ENCODE measurements at regions of chr3 and their contacts with region 1.

Region 1: DNA sequence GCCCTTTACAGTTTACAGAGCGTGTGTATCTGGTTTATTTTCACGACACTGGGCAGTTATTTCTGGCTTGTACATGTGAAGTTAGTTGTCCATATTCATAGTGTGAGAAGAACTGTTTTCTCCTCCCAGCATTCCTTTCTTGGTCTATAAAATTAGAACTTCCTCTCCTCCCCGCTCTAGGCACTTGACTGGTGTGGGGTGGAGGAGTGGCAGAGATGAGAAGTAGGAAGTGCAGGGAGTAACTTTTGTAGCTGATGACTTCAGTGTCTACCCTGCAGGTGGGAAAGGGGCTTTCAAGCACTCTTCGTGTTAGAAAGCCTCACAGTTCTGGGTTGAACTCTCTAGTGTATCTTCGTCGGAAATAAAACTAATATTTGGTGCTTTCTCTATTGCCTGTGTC is 13.4 kb downstream of the APOD start:
- DNase-seq: no peak
- H3K4me3 ChIP-seq: no peak overlapping the region
- H3K27ac ChIP-seq: no peak overlapping the region
- H3K4me1 ChIP-seq: no peaks in the 10 kb centered on the region
- H3K27me3 ChIP-seq: no peaks in the 10 kb centered on the region
- CTCF ChIP-seq: no peak
- POLR2A ChIP-seq: no peak

Region 2: DNA sequence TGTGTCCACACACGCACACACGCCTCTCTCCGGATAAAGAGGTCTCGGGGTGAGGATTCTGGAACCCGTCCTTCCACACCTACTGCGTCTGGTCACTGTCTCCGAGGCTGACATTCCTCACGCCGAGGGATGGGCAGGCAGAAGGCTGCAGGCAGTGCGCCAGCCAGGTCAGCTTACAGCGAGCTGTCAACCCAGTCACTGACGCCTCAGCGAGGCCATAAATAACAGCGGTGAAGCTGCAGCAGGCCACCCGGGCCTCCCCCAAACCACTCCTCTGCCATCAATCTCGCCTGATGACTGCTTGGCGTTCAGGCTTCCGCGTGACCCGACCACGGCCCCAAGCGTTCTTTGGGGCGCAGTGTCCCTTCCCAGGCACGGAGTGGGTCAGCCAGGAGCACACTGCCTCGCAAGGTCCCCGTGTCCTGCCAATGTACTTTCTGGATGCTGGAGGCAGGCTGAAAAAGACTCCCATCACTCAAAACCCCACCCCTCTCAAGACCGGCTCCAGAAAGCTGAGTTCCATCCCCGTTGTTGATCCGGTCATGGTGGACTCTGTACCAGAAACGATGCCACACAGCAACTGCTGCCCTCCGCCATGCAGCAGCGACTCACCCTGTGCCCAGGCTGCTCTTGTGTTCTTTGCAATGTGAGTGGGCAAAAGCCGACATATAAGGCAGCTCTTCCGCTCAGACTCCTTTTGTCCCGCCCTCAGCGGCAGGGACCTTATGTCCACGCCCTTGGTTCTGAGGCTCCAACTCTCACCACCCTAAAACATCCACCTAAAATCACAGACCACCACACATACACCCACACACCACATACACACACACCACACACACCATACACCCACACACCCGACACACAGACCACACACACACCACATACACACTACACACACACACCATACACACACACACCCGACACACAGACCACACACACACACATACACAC is 1246.3 kb before region 1 on chr3:
- intact Hi-C with region 1: loop called (anchors 10 kb)
- DNase-seq: peak; percentile 30 to 78
- H3K4me3 ChIP-seq: peak overlapping the region; percentile 20 to 64 (median 27)
- H3K27ac ChIP-seq: peak overlapping the region in 1 of 2 donors; percentile 43
- H3K4me1 ChIP-seq: no peaks in the 10 kb centered on the region
- H3K27me3 ChIP-seq: no peaks in the 10 kb centered on the region
- CTCF ChIP-seq: no peak
- POLR2A ChIP-seq: no peak

Measured in breast epithelium (tissue), 4 donors.